ENCODE measurements at regions of chr9 and their contacts with region 1.

Region 1: GRCh38 chr9:134944351-134944802 is 26.7 kb upstream of the FCN1 start:
- DNase-seq: peak; percentile 63
- ATAC-seq: peak; percentile 48

Region 2: DNA sequence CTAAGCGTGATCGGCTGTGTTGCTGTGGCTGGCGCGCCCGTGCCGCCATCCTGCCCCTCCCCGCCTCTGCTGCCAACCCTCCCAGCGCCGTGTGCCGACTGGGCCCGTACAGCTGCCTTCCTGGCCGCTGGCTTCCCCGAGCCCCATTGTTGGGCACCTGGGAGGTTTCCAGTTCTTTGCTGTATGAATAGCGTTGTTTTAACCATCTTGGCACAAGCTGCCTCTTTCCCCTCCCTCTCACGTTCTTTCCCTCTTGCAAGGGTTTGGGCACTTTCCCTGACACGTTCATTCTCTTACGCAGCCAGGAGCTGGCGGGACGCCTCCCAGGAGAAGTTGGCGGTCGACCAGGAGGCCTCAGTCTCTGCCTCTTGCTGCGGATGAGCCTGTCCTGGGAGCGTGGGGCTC is 661.3 kb before region 1 on chr9:
- intact Hi-C with region 1: no loop called
- DNase-seq: peak; percentile 72
- ATAC-seq: peak; percentile 63

Region 3: DNA sequence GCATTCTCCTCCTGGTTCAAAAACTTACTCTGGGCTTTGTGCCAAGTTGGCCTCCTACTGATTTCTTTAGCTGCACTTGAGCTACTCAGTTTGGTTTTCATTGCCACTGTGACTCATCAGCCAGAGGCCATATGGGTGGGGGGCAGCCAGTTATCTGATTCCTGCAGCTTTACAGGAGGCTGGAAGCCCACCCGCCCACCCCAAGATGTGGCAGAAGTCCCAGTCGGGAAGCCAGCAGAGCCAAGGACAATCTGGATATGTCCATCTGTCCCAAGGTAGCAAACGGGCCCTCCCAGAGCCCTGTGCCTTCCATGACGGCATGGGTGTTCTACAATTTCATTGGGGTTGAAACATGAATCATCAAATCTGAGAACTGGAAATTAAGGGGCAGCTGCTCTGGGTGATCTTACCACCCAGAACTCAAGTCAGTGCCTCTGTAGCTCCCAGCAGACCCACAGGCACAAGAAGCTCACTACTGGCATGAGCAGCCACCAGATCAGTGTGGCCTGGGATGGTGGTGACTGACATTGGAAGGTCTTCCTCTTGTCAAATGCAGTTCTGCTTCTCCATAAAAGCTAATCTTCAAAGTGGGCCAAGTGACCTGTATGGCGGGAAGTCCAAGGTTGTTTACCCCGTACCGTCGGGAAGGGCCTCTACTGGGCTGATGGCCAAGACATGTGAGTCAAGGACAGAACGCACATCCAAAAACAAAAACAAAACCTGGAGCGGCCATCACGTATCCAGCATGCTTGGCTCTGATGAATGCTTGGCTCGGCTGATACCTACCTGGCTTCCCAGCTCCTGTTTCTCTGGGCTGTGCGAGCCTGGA is 48.2 kb before region 1 on chr9:
- intact Hi-C with region 1: loop called (anchors 1 kb)
- DNase-seq: no peak
- ATAC-seq: peak; percentile 76

Region 4: GRCh38 chr9:135209852-135210251 is 265.5 kb after region 1 on chr9:
- intact Hi-C with region 1: no loop called
- DNase-seq: no peak
- ATAC-seq: no peak

Region 5: DNA sequence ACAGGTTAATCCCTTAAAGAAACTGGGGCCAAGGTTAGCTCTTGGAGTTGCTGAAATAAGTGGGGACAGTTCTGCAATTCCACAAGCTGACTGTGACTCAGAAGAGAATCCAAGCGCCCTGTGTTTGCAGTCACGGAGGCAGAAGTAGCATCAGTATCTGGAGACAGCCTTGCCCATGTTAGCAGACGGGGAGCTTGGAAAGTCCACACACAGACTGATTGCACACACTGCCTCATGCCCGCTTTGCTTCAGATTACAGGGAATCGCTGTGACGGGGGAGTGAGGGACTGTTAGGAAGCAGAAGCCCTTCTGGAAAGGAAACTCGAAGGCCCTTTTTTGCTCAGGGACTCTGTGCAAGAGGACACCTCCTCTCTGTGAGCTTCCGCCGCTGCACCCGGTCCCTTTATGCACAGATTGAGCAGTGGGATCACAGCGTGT is 504.3 kb after region 1 on chr9:
- intact Hi-C with region 1: no loop called
- DNase-seq: no peak
- ATAC-seq: no peak